Mucosa of descending colon (tissue), 3 donors: ENCODE measurements at regions of chr3 and their contacts with region 1.

Region 1: GRCh38 chr3:73100741-73101559 is 39.5 kb downstream of the EBLN2 start:
- DNase-seq: peak in 2 of 3 donors; percentile 71 to 95
- ATAC-seq: peak; percentile 94
- H3K4me3 ChIP-seq: no peak overlapping the region
- H3K4me1 ChIP-seq: no peaks in the 10 kb centered on the region
- CTCF ChIP-seq: peak; percentile 80

Region 2: GRCh38 chr3:73432023-73432705 is 331.2 kb after region 1 on chr3:
- intact Hi-C with region 1: loop called in 1 of 2 experiments (anchors 5 kb)
- DNase-seq: peak in 1 of 3 donors; percentile 34
- ATAC-seq: no peak
- H3K4me3 ChIP-seq: no peak overlapping the region
- H3K4me1 ChIP-seq: no peaks in the 10 kb centered on the region
- CTCF ChIP-seq: peak; percentile 36